Caco-2 (cell line): ENCODE measurements at regions of chr6 and their contacts with region 1.

Region 1: DNA sequence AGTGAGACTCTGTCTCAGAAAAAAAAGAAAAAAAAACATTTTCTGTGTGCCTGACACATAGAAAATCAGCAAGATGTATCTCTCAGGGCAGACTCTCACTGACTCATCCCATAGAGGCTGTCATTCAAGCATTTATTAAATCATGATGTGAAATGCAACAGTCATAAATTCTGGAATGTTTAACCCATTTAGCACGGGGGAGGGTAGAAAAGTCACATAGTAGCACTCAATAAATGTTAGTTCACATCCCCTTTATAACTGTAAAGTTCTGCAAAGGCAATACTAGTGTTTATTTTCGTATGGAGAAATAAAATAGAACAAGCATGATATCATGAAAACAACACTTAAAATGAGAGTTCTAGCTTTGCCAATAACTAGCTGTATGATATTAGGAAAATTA is 15.5 kb upstream of the CARMIL1 start:
- DNase-seq: no peak
- H3K4me3 ChIP-seq: no peak overlapping the region
- H3K4me3 Mint-ChIP-seq: no peak overlapping the region
- H3K27ac Mint-ChIP-seq: no peak overlapping the region
- H3K4me1 ChIP-seq: no peaks in the 10 kb centered on the region
- H3K4me1 Mint-ChIP-seq: no peaks in the 10 kb centered on the region
- H3K27me3 ChIP-seq: no peaks in the 10 kb centered on the region
- H3K27me3 Mint-ChIP-seq: no peaks in the 10 kb centered on the region
- CTCF ChIP-seq: no peak

Region 2: GRCh38 chr6:25042036-25042521 is 221.6 kb before region 1 on chr6:
- CTCF ChIA-PET with region 1: no interaction called
- POLR2A ChIA-PET with region 1: no interaction called
- intact Hi-C with region 1: no loop called
- DNase-seq: no peak
- H3K4me3 ChIP-seq: no peak overlapping the region
- H3K4me3 Mint-ChIP-seq: no peak overlapping the region
- H3K27ac Mint-ChIP-seq: no peak overlapping the region
- H3K4me1 ChIP-seq: no peaks in the 10 kb centered on the region
- H3K4me1 Mint-ChIP-seq: no peaks in the 10 kb centered on the region
- H3K27me3 ChIP-seq: no peaks in the 10 kb centered on the region
- H3K27me3 Mint-ChIP-seq: peaks cover 17% of the 10 kb centered on the region
- CTCF ChIP-seq: no peak

Region 3: DNA sequence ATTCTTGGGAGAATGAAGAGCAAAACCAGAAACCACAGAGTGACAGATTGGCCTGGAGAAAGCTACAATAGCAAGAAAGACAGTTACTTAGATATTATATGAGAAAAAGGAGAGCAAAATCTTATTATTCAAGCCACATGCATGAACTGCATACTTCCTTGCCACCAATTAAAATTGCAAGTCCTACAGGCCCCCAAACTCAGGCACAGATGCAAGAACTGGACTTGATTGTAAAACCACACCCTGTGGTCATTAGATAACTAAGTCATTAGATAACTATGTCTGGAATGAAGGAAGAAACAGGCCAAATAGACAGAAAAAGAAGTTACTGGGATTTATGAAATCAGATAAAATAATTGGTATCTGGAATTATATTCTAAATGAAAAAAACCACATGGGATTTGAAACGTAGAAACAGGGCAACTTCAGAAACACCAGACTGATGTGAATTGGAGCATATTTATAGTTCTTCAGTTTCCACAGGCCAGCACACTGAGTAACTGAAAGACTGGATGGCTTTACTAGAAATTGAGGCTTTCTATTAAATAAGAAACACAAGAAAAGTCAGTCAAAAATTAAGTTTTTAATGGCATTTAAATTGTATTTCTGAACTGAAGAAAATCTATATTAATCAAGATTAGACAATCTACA is 33.9 kb before region 1 on chr6:
- CTCF ChIA-PET with region 1: no interaction called
- POLR2A ChIA-PET with region 1: no interaction called
- intact Hi-C with region 1: no loop called
- DNase-seq: no peak
- H3K4me3 ChIP-seq: no peak overlapping the region
- H3K4me3 Mint-ChIP-seq: peak overlapping the region; percentile 4
- H3K27ac Mint-ChIP-seq: peak overlapping the region; percentile 42
- H3K4me1 ChIP-seq: peaks cover 13% of the 10 kb centered on the region
- H3K4me1 Mint-ChIP-seq: peaks cover 8% of the 10 kb centered on the region
- H3K27me3 ChIP-seq: no peaks in the 10 kb centered on the region
- H3K27me3 Mint-ChIP-seq: no peaks in the 10 kb centered on the region
- CTCF ChIP-seq: no peak

Region 4: GRCh38 chr6:25329982-25330381 is 66.3 kb after region 1 on chr6:
- CTCF ChIA-PET with region 1: no interaction called
- POLR2A ChIA-PET with region 1: no interaction called
- intact Hi-C with region 1: no loop called
- DNase-seq: no peak
- H3K4me3 ChIP-seq: no peak overlapping the region
- H3K4me3 Mint-ChIP-seq: no peak overlapping the region
- H3K27ac Mint-ChIP-seq: no peak overlapping the region
- H3K4me1 ChIP-seq: peaks cover 17% of the 10 kb centered on the region
- H3K4me1 Mint-ChIP-seq: peaks cover 17% of the 10 kb centered on the region
- H3K27me3 ChIP-seq: no peaks in the 10 kb centered on the region
- H3K27me3 Mint-ChIP-seq: no peaks in the 10 kb centered on the region
- CTCF ChIP-seq: no peak

Region 5: DNA sequence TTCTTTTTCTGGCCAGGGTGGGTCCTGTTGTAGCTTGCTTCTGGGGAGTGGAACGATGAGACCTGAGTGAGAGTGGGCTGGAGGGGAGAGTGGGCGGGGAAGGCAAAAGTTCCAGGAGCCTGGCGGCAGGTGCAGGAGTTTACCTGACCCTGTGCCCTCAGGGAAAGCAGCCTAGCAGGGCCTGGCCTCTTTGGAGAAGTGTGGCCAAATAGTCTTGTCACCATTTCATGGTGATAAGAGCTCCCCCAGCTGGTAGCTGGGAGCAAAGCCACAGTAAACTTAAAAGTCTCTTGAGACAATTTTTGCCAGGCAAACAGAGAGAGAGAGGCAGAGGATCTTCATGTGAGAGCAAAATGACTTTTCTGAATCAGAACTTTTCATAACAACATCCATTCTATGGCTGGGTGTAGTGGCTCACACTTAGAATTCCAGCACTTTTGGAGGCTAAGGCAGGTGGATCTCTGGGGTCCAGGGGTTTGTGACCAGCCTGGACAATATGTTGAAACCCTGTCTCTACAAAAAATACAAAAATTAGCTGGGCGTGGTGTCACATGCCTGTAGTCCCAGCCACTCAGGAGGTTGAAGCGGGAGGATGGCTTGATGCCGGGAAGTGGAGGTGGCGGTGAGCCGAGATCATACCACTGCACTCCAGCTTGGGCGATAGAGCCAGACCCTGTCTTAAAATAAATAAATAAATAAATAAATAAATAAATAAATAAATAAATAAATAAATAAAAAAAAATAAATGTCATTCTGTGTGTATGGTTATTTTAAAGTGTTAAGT is 226.6 kb after region 1 on chr6:
- CTCF ChIA-PET with region 1: interaction called, 34 read pairs
- POLR2A ChIA-PET with region 1: no interaction called
- intact Hi-C with region 1: loop called (anchors 1 kb)
- DNase-seq: peak; percentile 87 to 90
- H3K4me3 ChIP-seq: no peak overlapping the region
- H3K4me3 Mint-ChIP-seq: no peak overlapping the region
- H3K27ac Mint-ChIP-seq: peak overlapping the region; percentile 63
- H3K4me1 ChIP-seq: peaks cover 11% of the 10 kb centered on the region
- H3K4me1 Mint-ChIP-seq: peaks cover 7% of the 10 kb centered on the region
- H3K27me3 ChIP-seq: no peaks in the 10 kb centered on the region
- H3K27me3 Mint-ChIP-seq: no peaks in the 10 kb centered on the region
- CTCF ChIP-seq: peak; percentile 84 to 86

Region 6: DNA sequence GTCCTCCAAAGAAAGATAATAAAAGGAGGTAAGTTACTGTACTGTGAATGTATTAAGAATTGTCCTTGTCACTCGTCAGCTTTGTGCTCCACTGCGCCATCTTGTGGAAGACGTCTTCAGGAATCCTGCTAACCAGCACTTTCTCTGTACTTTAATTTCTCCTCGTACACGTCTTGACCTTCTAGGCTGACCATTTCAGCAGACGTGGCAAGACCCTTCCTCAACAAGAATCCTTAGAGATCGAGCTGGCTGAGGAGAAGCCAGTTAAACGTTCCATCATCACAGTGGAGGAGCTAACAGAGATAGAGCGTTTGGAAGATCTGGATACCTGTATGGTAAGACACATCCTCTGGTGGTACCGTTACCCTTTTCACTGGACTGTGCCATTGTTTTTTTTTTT is 292.9 kb after region 1 on chr6:
- CTCF ChIA-PET with region 1: interaction called, 5 read pairs
- POLR2A ChIA-PET with region 1: no interaction called
- intact Hi-C with region 1: loop called (anchors 1 kb)
- DNase-seq: peak; percentile 67 to 79
- H3K4me3 ChIP-seq: no peak overlapping the region
- H3K4me3 Mint-ChIP-seq: no peak overlapping the region
- H3K27ac Mint-ChIP-seq: no peak overlapping the region
- H3K4me1 ChIP-seq: no peaks in the 10 kb centered on the region
- H3K4me1 Mint-ChIP-seq: no peaks in the 10 kb centered on the region
- H3K27me3 ChIP-seq: no peaks in the 10 kb centered on the region
- H3K27me3 Mint-ChIP-seq: no peaks in the 10 kb centered on the region
- CTCF ChIP-seq: peak; percentile 79

Region 7: GRCh38 chr6:25601800-25602673 is 338.4 kb after region 1 on chr6:
- CTCF ChIA-PET with region 1: interaction called, 4 read pairs
- POLR2A ChIA-PET with region 1: no interaction called
- intact Hi-C with region 1: loop called (anchors 1 kb)
- DNase-seq: peak in 1 of 2 experiments; percentile 18
- H3K4me3 ChIP-seq: no peak overlapping the region
- H3K4me3 Mint-ChIP-seq: no peak overlapping the region
- H3K27ac Mint-ChIP-seq: no peak overlapping the region
- H3K4me1 ChIP-seq: peaks cover 13% of the 10 kb centered on the region
- H3K4me1 Mint-ChIP-seq: peaks cover 15% of the 10 kb centered on the region
- H3K27me3 ChIP-seq: no peaks in the 10 kb centered on the region
- H3K27me3 Mint-ChIP-seq: no peaks in the 10 kb centered on the region
- CTCF ChIP-seq: peak; percentile 39 to 64

Region 8: DNA sequence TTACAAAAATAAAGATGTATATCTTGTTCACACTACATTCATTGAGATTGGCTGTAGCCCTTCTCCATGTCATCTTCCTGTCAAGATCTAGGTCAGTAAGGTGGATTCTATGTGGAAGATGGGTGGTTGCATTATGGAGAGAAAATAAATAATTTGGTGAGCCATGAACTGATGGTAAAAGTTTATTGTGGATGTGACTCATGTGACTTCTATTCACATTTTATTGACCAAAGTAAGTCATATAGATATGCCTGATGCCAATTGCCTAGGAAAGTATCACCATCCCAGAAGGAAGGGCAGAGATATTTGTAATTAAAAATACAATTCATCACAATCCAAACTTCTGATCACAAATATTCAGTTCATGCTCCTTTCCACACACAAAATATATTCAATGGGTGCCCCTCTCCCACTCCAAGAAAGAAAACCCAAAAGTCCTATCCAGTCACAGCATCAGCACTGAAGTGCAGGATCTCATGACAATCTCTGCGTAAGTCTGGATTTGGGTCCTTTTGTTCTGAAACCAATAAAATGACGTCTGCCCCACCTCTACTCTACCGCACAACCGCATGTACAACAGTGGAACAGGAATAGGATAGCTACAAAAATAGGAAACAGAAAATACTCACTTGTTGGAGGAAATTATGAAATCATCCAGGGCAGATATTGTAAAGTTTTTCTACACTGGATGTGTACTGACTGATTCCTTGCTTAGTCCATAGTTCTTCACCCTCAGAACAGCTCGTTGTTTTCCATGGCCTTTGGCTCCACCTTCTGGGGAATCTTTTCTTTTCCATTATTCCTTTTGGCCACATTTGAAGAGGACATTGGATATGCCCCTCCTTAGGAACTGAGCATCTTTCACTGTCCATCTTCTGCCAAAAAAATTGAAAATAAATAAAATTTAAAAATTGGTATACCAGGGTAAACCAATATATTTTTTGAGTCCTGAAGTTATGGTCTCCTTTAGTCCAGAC is 626.5 kb after region 1 on chr6:
- CTCF ChIA-PET with region 1: interaction called, 6 read pairs
- POLR2A ChIA-PET with region 1: no interaction called
- intact Hi-C with region 1: loop called (anchors 5 kb)
- DNase-seq: peak; percentile 39 to 67
- H3K4me3 ChIP-seq: no peak overlapping the region
- H3K4me3 Mint-ChIP-seq: no peak overlapping the region
- H3K27ac Mint-ChIP-seq: no peak overlapping the region
- H3K4me1 ChIP-seq: no peaks in the 10 kb centered on the region
- H3K4me1 Mint-ChIP-seq: no peaks in the 10 kb centered on the region
- H3K27me3 ChIP-seq: no peaks in the 10 kb centered on the region
- H3K27me3 Mint-ChIP-seq: no peaks in the 10 kb centered on the region
- CTCF ChIP-seq: peak; percentile 31 to 50